Natural killer cell (primary cell): ENCODE measurements at regions of chr5 and their contacts with region 1.

Region 1: GRCh38 chr5:80407735-80408482 is at the start of gene ZFYVE16:
- DNase-seq: peak; percentile 96 to 99
- ATAC-seq: peak; percentile 90 to 96 (median 91)
- H3K4me3 ChIP-seq: peak within 1 kb of the TSS; percentile 75
- H3K4me3 Mint-ChIP-seq: peak within 1 kb of the TSS; percentile 92
- H3K27ac ChIP-seq: peak within 1 kb of the TSS; percentile 97
- H3K27ac Mint-ChIP-seq: peak within 1 kb of the TSS; percentile 98 to 99
- H3K4me1 ChIP-seq: peaks cover 11% of the 10 kb centered on the region
- H3K4me1 Mint-ChIP-seq: peaks cover 24 to 31% of the 10 kb centered on the region in 2 donors
- H3K27me3 ChIP-seq: no peaks in the 10 kb centered on the region
- H3K27me3 Mint-ChIP-seq: no peaks in the 10 kb centered on the region
- CTCF ChIP-seq: no peak
- total RNA-seq, gene ZFYVE16: 24.4 to 36.6 (median 30.1) TPM

Region 2: DNA sequence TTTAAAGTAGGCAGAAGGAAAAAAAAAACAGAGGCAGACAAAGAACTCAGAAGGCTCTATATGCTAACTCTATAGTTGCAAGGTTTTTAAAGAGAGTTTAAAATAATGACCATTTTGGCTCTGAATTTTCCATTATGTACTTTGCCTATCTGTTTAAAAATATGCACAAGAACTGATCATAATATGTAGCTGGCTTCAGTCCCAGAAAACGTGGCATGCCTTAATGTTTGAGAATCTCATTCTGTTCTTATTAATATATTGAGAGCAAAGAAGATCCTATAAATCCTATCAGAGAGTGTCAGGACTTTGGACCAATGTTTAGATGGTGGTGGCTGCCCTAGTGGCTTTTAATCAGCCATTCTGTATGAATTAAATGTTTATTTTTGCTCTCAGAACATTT is 1050.5 kb before region 1 on chr5:
- intact Hi-C with region 1: no loop called
- DNase-seq: no peak
- ATAC-seq: no peak
- H3K4me3 ChIP-seq: no peak overlapping the region
- H3K4me3 Mint-ChIP-seq: no peak overlapping the region
- H3K27ac ChIP-seq: no peak overlapping the region
- H3K27ac Mint-ChIP-seq: no peak overlapping the region
- H3K4me1 ChIP-seq: no peaks in the 10 kb centered on the region
- H3K4me1 Mint-ChIP-seq: no peaks in the 10 kb centered on the region
- H3K27me3 ChIP-seq: no peaks in the 10 kb centered on the region
- H3K27me3 Mint-ChIP-seq: peaks cover 0 to 3% of the 10 kb centered on the region in 2 donors
- CTCF ChIP-seq: no peak

Region 3: GRCh38 chr5:79621042-79621441 is 786.9 kb before region 1 on chr5:
- intact Hi-C with region 1: loop called (anchors 10 kb)
- DNase-seq: no peak
- ATAC-seq: no peak
- H3K4me3 ChIP-seq: no peak overlapping the region
- H3K4me3 Mint-ChIP-seq: no peak overlapping the region
- H3K27ac ChIP-seq: no peak overlapping the region
- H3K27ac Mint-ChIP-seq: no peak overlapping the region
- H3K4me1 ChIP-seq: no peaks in the 10 kb centered on the region
- H3K4me1 Mint-ChIP-seq: peaks cover 39 to 52% of the 10 kb centered on the region in 2 donors
- H3K27me3 ChIP-seq: no peaks in the 10 kb centered on the region
- H3K27me3 Mint-ChIP-seq: no peaks in the 10 kb centered on the region
- CTCF ChIP-seq: no peak

Region 4: GRCh38 chr5:80165452-80165851 is 242.5 kb before region 1 on chr5:
- intact Hi-C with region 1: no loop called
- DNase-seq: no peak
- ATAC-seq: no peak
- H3K4me3 ChIP-seq: no peak overlapping the region
- H3K4me3 Mint-ChIP-seq: no peak overlapping the region
- H3K27ac ChIP-seq: no peak overlapping the region
- H3K27ac Mint-ChIP-seq: no peak overlapping the region
- H3K4me1 ChIP-seq: no peaks in the 10 kb centered on the region
- H3K4me1 Mint-ChIP-seq: no peaks in the 10 kb centered on the region
- H3K27me3 ChIP-seq: no peaks in the 10 kb centered on the region
- H3K27me3 Mint-ChIP-seq: no peaks in the 10 kb centered on the region
- CTCF ChIP-seq: no peak

Region 5: GRCh38 chr5:80204808-80205614 is 202.9 kb before region 1 on chr5:
- intact Hi-C with region 1: no loop called
- DNase-seq: peak in 1 of 2 donors; percentile 63
- ATAC-seq: peak in 1 of 3 donors; percentile 69
- H3K4me3 ChIP-seq: no peak overlapping the region
- H3K4me3 Mint-ChIP-seq: no peak overlapping the region
- H3K27ac ChIP-seq: no peak overlapping the region
- H3K27ac Mint-ChIP-seq: no peak overlapping the region
- H3K4me1 ChIP-seq: no peaks in the 10 kb centered on the region
- H3K4me1 Mint-ChIP-seq: peaks cover 13 to 18% of the 10 kb centered on the region in 2 donors
- H3K27me3 ChIP-seq: no peaks in the 10 kb centered on the region
- H3K27me3 Mint-ChIP-seq: no peaks in the 10 kb centered on the region
- CTCF ChIP-seq: no peak

Region 6: GRCh38 chr5:80255732-80256479 is 152.0 kb before region 1 on chr5 and contains the start of gene SERINC5:
- intact Hi-C with region 1: loop called (anchors 5 kb)
- DNase-seq: peak; percentile 76 to 91
- ATAC-seq: peak; percentile 87 to 95 (median 88)
- H3K4me3 ChIP-seq: peak within 1 kb of the TSS; percentile 88
- H3K4me3 Mint-ChIP-seq: peak within 1 kb of the TSS; percentile 93
- H3K27ac ChIP-seq: peak within 1 kb of the TSS; percentile 85
- H3K27ac Mint-ChIP-seq: peak within 1 kb of the TSS; percentile 88 to 97
- H3K4me1 ChIP-seq: peaks cover 27% of the 10 kb centered on the region
- H3K4me1 Mint-ChIP-seq: peaks cover 21 to 38% of the 10 kb centered on the region in 2 donors
- H3K27me3 ChIP-seq: no peaks in the 10 kb centered on the region
- H3K27me3 Mint-ChIP-seq: no peaks in the 10 kb centered on the region
- CTCF ChIP-seq: no peak
- total RNA-seq, gene SERINC5: 6.8 to 18.9 (median 14.5) TPM

Region 7: DNA sequence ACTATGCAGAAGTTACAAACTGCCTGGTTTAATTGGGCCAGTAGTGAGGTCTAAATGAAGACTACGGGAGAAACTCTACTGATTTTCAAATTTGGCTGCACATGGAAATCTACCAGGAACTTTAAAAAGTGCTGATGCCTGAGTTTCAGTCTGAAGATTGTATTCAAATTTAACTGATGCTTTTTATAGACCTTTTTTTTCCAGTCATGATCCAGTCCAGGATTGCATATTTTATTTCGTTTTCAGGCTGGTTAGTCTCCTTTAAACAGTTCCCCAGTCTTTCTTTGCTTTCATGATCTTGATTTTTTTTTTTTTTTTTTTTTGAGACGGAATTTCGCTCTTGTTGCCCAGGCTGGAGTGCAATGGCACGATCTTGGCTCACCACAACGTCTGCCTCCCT is 111.8 kb before region 1 on chr5:
- intact Hi-C with region 1: no loop called
- DNase-seq: no peak
- ATAC-seq: no peak
- H3K4me3 ChIP-seq: no peak overlapping the region
- H3K4me3 Mint-ChIP-seq: no peak overlapping the region
- H3K27ac ChIP-seq: no peak overlapping the region
- H3K27ac Mint-ChIP-seq: no peak overlapping the region
- H3K4me1 ChIP-seq: no peaks in the 10 kb centered on the region
- H3K4me1 Mint-ChIP-seq: no peaks in the 10 kb centered on the region
- H3K27me3 ChIP-seq: no peaks in the 10 kb centered on the region
- H3K27me3 Mint-ChIP-seq: peaks cover 0 to 8% of the 10 kb centered on the region in 2 donors
- CTCF ChIP-seq: no peak